ENCODE measurements at regions of chr10 and their contacts with region 1.

Region 1: DNA sequence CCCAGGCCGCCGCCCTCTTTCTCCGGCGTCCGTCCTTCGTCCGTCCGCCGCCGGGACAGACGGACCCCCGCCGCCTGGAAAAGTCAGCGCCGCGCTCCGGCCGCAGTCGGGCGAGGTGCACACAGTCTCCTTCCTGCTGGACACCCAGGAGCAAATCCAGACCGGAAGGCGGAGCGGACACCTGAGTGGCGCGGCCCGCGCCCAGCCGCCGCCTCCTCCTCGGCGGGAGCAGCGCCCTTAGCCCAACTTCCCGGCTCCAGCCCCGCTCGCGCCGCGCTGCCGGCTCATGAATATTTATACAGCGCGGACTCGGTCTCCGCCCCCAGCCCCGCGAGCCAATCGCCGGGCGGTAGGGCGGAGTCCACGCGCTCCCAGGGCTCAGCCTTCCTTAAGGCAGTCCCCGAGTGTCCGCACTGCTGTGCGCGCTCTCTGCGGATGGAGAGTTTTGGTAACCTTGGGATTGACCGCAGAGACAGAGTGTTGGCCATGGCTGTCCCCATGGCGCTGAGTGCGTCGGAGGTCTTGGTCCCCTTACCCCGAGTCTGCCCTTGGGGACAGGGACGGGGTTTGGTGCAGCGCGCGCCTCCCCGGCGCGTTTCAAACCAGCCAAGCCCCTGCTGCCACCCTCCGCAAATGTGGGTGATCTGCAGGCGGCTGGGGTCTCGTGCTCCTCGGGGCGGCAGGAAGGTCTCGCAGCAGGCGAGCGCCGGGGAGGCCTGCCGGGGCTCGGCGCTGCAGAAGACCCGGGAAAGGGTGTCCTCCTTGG is at the start of gene FZD8:
- DNase-seq: peak; percentile 93 to 95 (median 94)
- ATAC-seq: peak; percentile 94 to 97 (median 96)
- H3K4me3 ChIP-seq: peak within 1 kb of the TSS; percentile 74 to 97 (median 80)
- H3K27ac ChIP-seq: peak within 1 kb of the TSS; percentile 75 to 97 (median 92)
- H3K4me1 ChIP-seq: peaks cover 0 to 39% (median 17%) of the 10 kb centered on the region in 12 donors
- H3K27me3 ChIP-seq: peaks cover 0 to 48% (median 0%) of the 10 kb centered on the region in 9 donors
- CTCF ChIP-seq: peak in 6 of 12 donors; percentile 6 to 28 (median 12)
- POLR2A ChIP-seq: peak; percentile 89 to 98
- total RNA-seq, gene FZD8: 4.0 to 17.1 (median 7.8) TPM

Region 2: DNA sequence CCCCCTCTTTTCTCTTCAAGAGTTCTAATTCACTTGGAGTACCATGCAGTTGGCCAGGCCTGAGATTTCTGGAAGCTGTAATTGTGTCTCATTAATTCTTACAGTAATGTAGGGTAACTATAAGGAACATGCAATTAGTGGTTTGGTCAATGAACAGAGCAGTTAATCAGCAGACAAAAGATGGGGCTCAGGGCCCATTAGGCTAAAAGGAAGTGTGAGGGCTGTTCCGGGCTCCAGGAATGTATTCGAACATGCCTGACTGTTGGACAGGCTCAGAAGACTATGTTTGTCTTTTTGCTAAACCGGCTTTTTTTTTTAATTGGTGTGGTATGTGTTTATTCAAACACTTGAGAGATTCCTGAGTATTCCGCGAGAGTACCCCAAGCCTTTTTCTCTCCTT is 42.4 kb after region 1 on chr10:
- intact Hi-C with region 1: no loop called
- DNase-seq: no peak
- ATAC-seq: no peak
- H3K4me3 ChIP-seq: no peak overlapping the region
- H3K27ac ChIP-seq: no peak overlapping the region
- H3K4me1 ChIP-seq: no peaks in the 10 kb centered on the region
- H3K27me3 ChIP-seq: no peaks in the 10 kb centered on the region
- CTCF ChIP-seq: no peak
- POLR2A ChIP-seq: no peak

Region 3: DNA sequence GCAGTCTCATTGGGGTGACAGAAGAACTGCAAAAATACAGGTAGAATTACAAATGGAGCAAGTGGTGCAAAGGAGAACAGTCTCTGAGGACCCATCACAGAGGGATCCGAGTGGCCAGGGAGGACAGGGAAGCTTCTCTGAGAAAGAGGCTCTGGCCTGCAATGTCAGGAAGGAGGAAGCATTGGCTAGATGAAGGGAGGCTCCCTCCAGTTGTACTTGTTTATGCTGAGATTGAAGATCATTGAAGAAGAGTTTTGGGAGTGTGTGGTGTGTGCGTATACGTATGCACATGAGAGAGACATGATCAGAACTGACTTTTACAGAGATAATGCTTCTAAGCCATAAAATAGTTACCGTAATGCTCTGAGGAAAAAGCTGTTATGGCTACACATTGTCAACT is 274.6 kb after region 1 on chr10:
- intact Hi-C with region 1: loop called in 6 of 10 experiments (anchors 1 to 5 kb)
- DNase-seq: no peak
- ATAC-seq: peak in 1 of 4 donors; percentile 52
- H3K4me3 ChIP-seq: no peak overlapping the region
- H3K27ac ChIP-seq: no peak overlapping the region
- H3K4me1 ChIP-seq: peaks cover 0 to 10% (median 4%) of the 10 kb centered on the region in 12 donors
- H3K27me3 ChIP-seq: no peaks in the 10 kb centered on the region
- CTCF ChIP-seq: peak in 8 of 12 donors; percentile 6 to 43 (median 24)
- POLR2A ChIP-seq: no peak

Region 4: DNA sequence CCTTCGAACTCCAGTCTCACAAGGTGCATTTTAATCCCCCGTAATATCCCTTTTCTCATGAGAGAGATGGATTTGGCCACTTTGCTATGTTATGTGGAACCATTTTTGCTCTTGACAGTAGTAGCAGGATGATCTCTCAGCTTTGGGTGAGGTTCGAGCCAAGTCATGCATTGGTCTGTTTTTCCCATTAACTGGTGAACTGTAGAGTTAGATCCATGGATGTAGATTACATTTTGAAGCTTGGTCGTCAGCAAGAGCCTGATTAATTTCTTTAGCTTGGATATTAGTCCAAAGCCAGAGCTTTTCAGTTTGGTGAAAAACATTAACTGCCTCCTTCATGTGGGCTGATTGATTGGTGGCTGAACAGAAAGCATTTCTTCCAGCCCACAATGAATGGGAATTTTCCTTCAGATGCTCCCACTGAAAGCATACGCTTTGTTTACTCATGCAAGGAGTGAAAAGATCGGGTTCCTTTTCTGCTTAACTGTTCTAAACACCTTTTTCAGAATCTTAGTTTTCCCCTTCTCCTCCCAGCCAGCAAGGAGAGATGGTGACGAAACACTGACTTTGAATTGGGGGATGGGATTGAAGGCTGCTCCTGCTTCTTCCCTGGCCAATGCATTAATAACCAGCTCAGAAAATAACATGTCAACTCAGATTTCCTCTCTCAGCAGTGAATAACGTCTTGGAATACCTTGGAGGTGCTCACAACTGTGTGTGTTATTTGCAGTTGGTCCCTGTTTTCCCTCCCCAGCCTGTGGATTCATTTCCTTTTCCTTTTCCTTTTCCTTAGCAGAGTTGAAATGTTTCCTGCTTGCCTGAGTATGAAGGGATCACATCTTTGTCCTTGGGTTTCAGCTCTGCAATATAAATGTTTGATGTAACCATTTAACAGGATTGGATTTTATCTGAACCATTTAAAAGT is 351.6 kb after region 1 on chr10:
- intact Hi-C with region 1: loop called in 8 of 10 experiments (anchors 5 to 10 kb)
- DNase-seq: no peak
- ATAC-seq: peak in 1 of 4 donors; percentile 61
- H3K4me3 ChIP-seq: no peak overlapping the region
- H3K27ac ChIP-seq: no peak overlapping the region
- H3K4me1 ChIP-seq: peaks cover 0 to 27% (median 0%) of the 10 kb centered on the region in 12 donors
- H3K27me3 ChIP-seq: no peaks in the 10 kb centered on the region
- CTCF ChIP-seq: no peak
- POLR2A ChIP-seq: no peak

Region 5: GRCh38 chr10:36181401-36181800 is 539.2 kb after region 1 on chr10:
- intact Hi-C with region 1: loop called in 3 of 10 experiments (anchors 5 to 10 kb)
- DNase-seq: peak in 1 of 5 donors; percentile 19
- ATAC-seq: peak in 2 of 4 donors; percentile 80 to 85
- H3K4me3 ChIP-seq: no peak overlapping the region
- H3K27ac ChIP-seq: peak overlapping the region in 5 of 12 donors; percentile 36 to 76 (median 59)
- H3K4me1 ChIP-seq: peaks cover 0 to 24% (median 15%) of the 10 kb centered on the region in 12 donors
- H3K27me3 ChIP-seq: no peaks in the 10 kb centered on the region
- CTCF ChIP-seq: no peak
- POLR2A ChIP-seq: no peak

Region 6: GRCh38 chr10:36441557-36441956 is 799.3 kb after region 1 on chr10:
- intact Hi-C with region 1: loop called in 2 of 10 experiments (anchors 5 kb)
- DNase-seq: peak in 1 of 5 donors; percentile 66
- ATAC-seq: peak; percentile 54 to 97 (median 84)
- H3K4me3 ChIP-seq: no peak overlapping the region
- H3K27ac ChIP-seq: peak overlapping the region in 1 of 12 donors; percentile 24
- H3K4me1 ChIP-seq: peaks cover 0 to 14% (median 0%) of the 10 kb centered on the region in 12 donors
- H3K27me3 ChIP-seq: no peaks in the 10 kb centered on the region
- CTCF ChIP-seq: no peak
- POLR2A ChIP-seq: no peak

Region 7: GRCh38 chr10:36489611-36490228 is 847.5 kb after region 1 on chr10:
- intact Hi-C with region 1: loop called in 1 of 10 experiments (anchors 5 kb)
- DNase-seq: peak in 4 of 5 donors; percentile 44 to 65 (median 56)
- ATAC-seq: peak; percentile 59 to 83 (median 80)
- H3K4me3 ChIP-seq: no peak overlapping the region
- H3K27ac ChIP-seq: peak overlapping the region in 10 of 12 donors; percentile 5 to 69 (median 58)
- H3K4me1 ChIP-seq: peaks cover 0 to 43% (median 22%) of the 10 kb centered on the region in 12 donors
- H3K27me3 ChIP-seq: no peaks in the 10 kb centered on the region
- CTCF ChIP-seq: no peak
- POLR2A ChIP-seq: no peak

Region 8: GRCh38 chr10:36725581-36726520 is 1083.6 kb after region 1 on chr10:
- intact Hi-C with region 1: loop called in 3 of 10 experiments (anchors 5 kb)
- DNase-seq: peak in 3 of 5 donors; percentile 11 to 50 (median 28)
- ATAC-seq: peak in 3 of 4 donors; percentile 69 to 91 (median 78)
- H3K4me3 ChIP-seq: no peak overlapping the region
- H3K27ac ChIP-seq: no peak overlapping the region
- H3K4me1 ChIP-seq: no peaks in the 10 kb centered on the region
- H3K27me3 ChIP-seq: no peaks in the 10 kb centered on the region
- CTCF ChIP-seq: peak in 9 of 12 donors; percentile 8 to 48 (median 32)
- POLR2A ChIP-seq: no peak